SK-N-SH (cell line): ENCODE measurements at regions of chr7 and their contacts with region 1.

Region 1: GRCh38 chr7:154953006-154953684 is 49.8 kb downstream of the PAXIP1 start:
- DNase-seq: peak; percentile 63
- H3K4me3 ChIP-seq: no peak overlapping the region; a peak in 1 of 4 replicates
- H3K27ac ChIP-seq: no peak overlapping the region
- H3K4me1 ChIP-seq: no peaks in the 10 kb centered on the region
- H3K27me3 ChIP-seq: no peaks in the 10 kb centered on the region
- CTCF ChIP-seq: peak; percentile 86
- EP300 ChIP-seq: no peak
- RAD21 ChIP-seq: peak; percentile 48

Region 2: GRCh38 chr7:154968336-154969001 is 15.3 kb after region 1 on chr7:
- CTCF ChIA-PET with region 1: interaction called, 25 read pairs
- POLR2A ChIA-PET with region 1: no interaction called
- DNase-seq: peak; percentile 32
- H3K4me3 ChIP-seq: no peak overlapping the region
- H3K27ac ChIP-seq: no peak overlapping the region
- H3K4me1 ChIP-seq: peaks cover 0 to 7% of the 10 kb centered on the region in 2 experiments; a peak in 1 of 4 replicates
- H3K27me3 ChIP-seq: no peaks in the 10 kb centered on the region
- CTCF ChIP-seq: no peak
- EP300 ChIP-seq: no peak
- RAD21 ChIP-seq: no peak

Region 3: GRCh38 chr7:154984601-154985188 is 31.6 kb after region 1 on chr7:
- CTCF ChIA-PET with region 1: interaction called, 12 read pairs
- POLR2A ChIA-PET with region 1: no interaction called
- DNase-seq: peak; percentile 67
- H3K4me3 ChIP-seq: no peak overlapping the region
- H3K27ac ChIP-seq: no peak overlapping the region
- H3K4me1 ChIP-seq: peaks cover 0 to 10% of the 10 kb centered on the region in 2 experiments; a peak in 2 of 4 replicates
- H3K27me3 ChIP-seq: no peaks in the 10 kb centered on the region
- CTCF ChIP-seq: no peak
- EP300 ChIP-seq: peak in 1 of 2 experiments; percentile 43; a peak in 1 of 4 replicates
- RAD21 ChIP-seq: no peak